Activated CD8-positive, alpha-beta memory T cell treated with anti-CD3 and anti-CD28 coated beads, Interleukin-2, amount 10 ng/mL, durations not matched to agents 7 days and 5 days (primary cell): ENCODE measurements at regions of chr17 and their contacts with region 1.

Region 1: GRCh38 chr17:65137021-65137991 is at the start of gene RGS9:
- DNase-seq: peak; percentile 88
- ATAC-seq: peak; percentile 99
- H3K4me3 Mint-ChIP-seq: peak within 1 kb of the TSS; percentile 77
- H3K27ac Mint-ChIP-seq: peak within 1 kb of the TSS; percentile 76
- H3K4me1 Mint-ChIP-seq: peaks cover 39% of the 10 kb centered on the region
- H3K27me3 Mint-ChIP-seq: peaks cover 16% of the 10 kb centered on the region
- total RNA-seq, gene RGS9: 4.7 to 16.0 TPM

Region 2: DNA sequence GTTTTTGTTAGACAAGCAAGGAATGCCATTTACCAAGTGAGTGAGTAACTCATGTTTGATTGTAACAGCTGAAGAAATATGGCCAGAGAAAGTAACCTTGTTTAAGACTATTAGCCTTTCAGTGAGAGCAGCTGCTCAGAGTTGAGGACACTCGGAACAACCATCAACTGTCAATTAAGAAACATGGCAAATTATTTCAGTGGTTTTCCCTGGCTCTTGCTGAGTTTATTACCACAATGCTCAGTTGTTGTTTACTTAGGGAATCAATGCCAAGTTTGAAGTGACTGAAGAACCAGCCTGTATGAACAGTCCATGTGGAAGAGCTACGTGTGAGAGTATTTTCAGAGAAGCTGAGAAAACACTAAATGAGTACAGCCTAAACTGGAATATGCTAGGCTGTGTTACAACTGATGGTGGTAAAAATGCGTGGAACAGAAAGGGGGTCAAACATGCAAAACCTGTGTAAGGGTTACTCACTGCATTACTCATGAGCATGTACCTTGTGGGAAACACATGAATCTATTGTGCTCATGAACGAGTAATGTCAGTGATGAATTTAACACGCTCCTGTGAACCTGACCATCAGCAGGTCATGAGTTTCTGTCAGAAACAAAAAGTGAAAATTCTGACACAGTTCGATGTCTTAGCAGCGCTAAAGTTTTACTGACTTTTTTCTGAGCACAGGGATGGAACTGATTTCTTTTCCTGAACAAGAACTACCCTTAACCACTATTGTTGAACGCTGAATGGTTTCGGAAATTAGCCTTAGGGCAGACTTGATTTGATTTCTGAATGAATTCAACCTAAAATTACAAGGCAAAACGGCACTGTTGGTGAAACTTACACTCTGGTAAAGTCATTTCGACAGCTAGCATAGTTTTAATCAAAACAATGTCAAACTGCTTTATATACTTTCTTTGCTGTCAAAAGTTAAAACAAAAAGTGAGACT is 114.3 kb before region 1 on chr17:
- CTCF ChIA-PET with region 1: no interaction called
- DNase-seq: no peak
- ATAC-seq: peak; percentile 20
- H3K4me3 Mint-ChIP-seq: peak overlapping the region; percentile 43
- H3K27ac Mint-ChIP-seq: no peak overlapping the region
- H3K4me1 Mint-ChIP-seq: peaks cover 71% of the 10 kb centered on the region
- H3K27me3 Mint-ChIP-seq: no peaks in the 10 kb centered on the region

Region 3: GRCh38 chr17:65122836-65123756 is 14.2 kb before region 1 on chr17:
- CTCF ChIA-PET with region 1: interaction called, 19 read pairs
- DNase-seq: peak; percentile 91
- ATAC-seq: peak; percentile 83
- H3K4me3 Mint-ChIP-seq: peak overlapping the region; percentile 75
- H3K27ac Mint-ChIP-seq: peak overlapping the region; percentile 88
- H3K4me1 Mint-ChIP-seq: peaks cover 26% of the 10 kb centered on the region
- H3K27me3 Mint-ChIP-seq: peaks cover 10% of the 10 kb centered on the region

Region 4: GRCh38 chr17:65147955-65148354 is 10.6 kb after region 1 on chr17:
- CTCF ChIA-PET with region 1: interaction called, 15 read pairs
- DNase-seq: no peak
- ATAC-seq: no peak
- H3K4me3 Mint-ChIP-seq: no peak overlapping the region
- H3K27ac Mint-ChIP-seq: no peak overlapping the region
- H3K4me1 Mint-ChIP-seq: peaks cover 3% of the 10 kb centered on the region
- H3K27me3 Mint-ChIP-seq: peaks cover 22% of the 10 kb centered on the region

Region 5: DNA sequence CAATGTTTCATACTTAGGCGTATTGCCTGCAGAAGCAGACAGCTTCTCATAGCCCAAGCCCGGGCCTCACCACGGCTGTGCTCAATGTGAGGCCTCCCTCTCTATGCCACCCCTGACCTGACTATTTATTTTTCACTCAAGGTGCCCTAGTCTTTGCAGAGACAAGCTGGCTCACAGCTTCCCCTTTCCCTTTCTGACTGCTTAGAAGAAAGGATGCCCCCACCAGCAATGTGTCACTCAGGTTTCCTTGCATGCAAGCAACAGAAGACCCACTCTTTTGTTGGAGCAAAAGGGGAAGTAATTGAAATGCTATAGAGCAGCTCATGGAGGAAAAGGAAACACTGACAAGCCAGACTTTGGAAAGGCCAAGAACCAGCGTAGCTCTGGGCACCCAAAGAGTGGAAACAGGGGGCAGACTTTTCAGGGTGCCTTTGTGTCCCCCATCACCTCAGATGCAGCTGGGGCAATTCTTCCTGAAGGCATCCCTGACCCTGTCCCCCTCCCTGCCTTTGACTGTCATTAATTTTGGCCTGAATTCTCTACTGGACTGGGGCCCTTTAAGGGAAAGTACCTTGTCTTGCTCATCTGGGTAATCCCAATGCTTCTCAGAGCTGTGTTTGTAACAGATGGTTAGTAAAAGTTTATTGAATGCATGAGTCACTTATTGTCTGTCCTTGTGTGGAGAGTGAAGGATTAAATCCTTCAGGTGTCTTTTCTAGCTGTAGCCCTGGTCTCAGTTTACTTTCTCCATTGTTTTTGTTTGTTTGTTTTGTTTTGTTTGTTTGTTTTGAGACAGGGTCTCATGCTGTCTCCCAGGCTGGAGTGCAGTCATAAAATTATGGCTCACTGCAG is 17.7 kb after region 1 on chr17:
- CTCF ChIA-PET with region 1: interaction called, 12 read pairs
- DNase-seq: no peak
- ATAC-seq: peak; percentile 66
- H3K4me3 Mint-ChIP-seq: no peak overlapping the region
- H3K27ac Mint-ChIP-seq: no peak overlapping the region
- H3K4me1 Mint-ChIP-seq: peaks cover 13% of the 10 kb centered on the region
- H3K27me3 Mint-ChIP-seq: peaks cover 14% of the 10 kb centered on the region

Region 6: GRCh38 chr17:65173284-65173793 is 36.0 kb after region 1 on chr17:
- CTCF ChIA-PET with region 1: interaction called, 21 read pairs
- DNase-seq: peak; percentile 94
- ATAC-seq: peak; percentile 92
- H3K4me3 Mint-ChIP-seq: no peak overlapping the region
- H3K27ac Mint-ChIP-seq: no peak overlapping the region
- H3K4me1 Mint-ChIP-seq: peaks cover 31% of the 10 kb centered on the region
- H3K27me3 Mint-ChIP-seq: no peaks in the 10 kb centered on the region

Region 7: DNA sequence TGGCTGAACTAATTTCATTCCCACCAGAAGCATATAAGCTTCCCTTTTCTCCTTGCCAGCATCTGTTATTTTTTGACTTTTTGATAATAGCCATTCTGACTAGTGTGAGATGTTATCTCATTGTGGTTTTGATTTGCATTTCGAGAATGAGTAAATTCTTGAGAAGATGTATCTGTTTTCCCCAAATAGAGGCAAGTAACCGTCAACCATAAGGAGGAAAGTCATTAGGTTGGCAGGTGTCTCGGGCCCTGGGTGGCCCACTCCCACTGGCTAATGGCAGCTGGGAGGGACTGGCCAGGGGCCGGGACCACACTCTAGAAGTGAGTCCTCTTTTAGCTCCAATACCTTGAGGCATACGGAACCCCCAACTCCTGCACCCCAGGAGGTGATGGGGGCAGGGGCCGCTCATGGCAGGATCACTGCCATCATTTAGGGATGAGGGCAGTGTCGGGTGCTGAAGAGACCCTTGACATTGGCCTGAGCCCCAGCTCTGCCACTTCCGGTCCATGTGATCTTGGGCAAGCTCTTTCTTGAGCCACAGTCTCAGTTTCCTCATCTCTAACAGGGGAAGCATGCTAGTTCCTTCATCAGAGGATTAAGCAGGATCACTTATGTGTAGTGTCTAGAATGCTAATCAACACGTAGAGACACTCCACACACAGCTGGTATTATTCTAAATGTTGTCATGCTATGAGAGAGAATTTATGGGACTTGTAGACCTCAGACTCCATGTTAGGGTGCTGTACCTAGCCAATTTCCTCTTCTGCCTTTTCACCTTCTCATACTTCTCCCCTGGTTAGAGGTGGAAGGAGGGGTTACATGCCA is 44.1 kb after region 1 on chr17:
- CTCF ChIA-PET with region 1: interaction called, 13 read pairs
- DNase-seq: peak; percentile 76
- ATAC-seq: peak; percentile 56
- H3K4me3 Mint-ChIP-seq: peak overlapping the region; percentile 21
- H3K27ac Mint-ChIP-seq: peak overlapping the region; percentile 90
- H3K4me1 Mint-ChIP-seq: peaks cover 81% of the 10 kb centered on the region
- H3K27me3 Mint-ChIP-seq: peaks cover 5% of the 10 kb centered on the region

Region 8: DNA sequence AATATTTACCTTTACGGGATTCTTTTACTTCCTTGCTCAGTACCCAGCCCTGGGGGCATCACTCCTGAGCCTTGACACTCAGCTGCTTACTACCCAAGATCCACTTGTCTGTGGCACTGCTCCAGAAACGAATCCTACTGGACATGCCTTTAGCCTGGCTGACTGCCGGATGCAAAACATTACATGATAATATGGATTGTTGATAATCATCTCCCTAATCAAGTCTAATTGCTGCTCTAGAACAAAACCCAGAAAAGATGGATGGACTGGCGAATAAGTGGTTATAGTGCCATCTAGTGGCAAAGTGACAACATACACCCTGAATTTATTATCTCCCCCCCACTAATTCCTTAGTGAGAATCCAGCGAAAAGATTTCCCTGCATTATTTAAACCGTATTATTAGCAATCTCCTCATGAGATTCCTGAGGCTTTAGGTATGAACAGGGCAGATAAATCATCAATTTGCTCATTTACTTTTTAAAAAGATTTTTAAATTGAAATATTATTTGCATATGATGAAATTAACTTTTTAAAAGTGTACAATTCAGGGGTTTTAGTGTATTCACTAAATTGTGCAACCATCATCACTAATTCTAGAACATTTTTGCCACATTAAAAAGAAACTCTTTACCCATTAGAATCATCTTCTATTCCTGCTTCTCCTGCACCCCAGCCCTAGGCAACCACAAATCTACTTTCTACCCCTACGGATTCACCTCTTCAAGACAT is 61.5 kb after region 1 on chr17:
- CTCF ChIA-PET with region 1: interaction called, 17 read pairs
- DNase-seq: no peak
- ATAC-seq: peak; percentile 65
- H3K4me3 Mint-ChIP-seq: no peak overlapping the region
- H3K27ac Mint-ChIP-seq: no peak overlapping the region
- H3K4me1 Mint-ChIP-seq: peaks cover 12% of the 10 kb centered on the region
- H3K27me3 Mint-ChIP-seq: peaks cover 3% of the 10 kb centered on the region

Region 9: DNA sequence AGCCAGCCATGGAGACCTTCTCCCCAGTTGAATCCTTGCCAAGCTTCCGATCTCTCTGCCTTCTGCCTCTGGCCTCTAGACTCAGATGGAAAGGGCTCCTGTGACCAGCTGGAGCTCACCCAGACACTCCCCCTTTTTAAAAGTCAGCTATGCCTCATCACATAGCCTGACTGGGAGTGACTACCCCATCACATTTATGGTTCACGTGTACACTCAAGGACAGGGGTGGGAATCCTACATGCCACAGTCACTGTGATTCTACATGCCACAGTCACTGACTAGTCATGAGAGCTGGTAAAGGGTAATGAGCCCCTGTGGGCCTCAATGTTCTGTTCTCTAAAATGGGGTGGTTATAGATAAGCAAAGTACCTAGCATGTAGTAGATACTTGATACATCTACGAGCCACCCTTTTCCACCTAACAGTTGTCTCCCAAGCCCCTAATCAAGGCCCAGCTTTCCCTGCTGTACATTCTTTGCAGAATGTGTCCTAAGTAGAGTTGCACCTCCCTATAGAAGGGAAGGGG is 85.0 kb after region 1 on chr17:
- CTCF ChIA-PET with region 1: no interaction called
- DNase-seq: no peak
- ATAC-seq: no peak
- H3K4me3 Mint-ChIP-seq: no peak overlapping the region
- H3K27ac Mint-ChIP-seq: no peak overlapping the region
- H3K4me1 Mint-ChIP-seq: peaks cover 3% of the 10 kb centered on the region
- H3K27me3 Mint-ChIP-seq: peaks cover 23% of the 10 kb centered on the region